BJ (cell line): ENCODE measurements at regions of chr10 and their contacts with region 1.

Region 1: DNA sequence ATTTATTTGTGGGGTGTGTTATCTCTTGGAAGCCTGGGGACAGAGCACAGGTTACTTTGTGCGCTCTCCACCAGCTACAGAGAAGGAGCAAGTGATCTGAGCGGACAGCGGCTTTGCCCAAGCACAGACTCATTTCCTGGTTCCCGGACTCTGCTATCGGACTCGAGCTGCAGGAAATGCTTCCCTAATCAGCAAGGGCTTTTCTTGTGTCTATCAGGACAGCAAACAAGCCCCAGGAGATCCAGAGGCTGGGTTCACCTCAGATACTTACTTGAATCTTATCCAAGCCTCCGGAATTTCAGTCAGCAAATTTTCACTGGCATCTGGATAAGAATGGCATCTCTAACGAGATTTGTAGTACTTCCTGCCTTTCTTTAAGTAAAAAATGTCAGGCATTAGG is 27.8 kb downstream of the MRC1 start:
- DNase-seq: no peak
- H3K4me3 ChIP-seq: peak overlapping the region; percentile 18; the same call in 1 of the 2 replicates
- H3K27me3 ChIP-seq: no peaks in the 10 kb centered on the region
- CTCF ChIP-seq: no peak

Region 2: DNA sequence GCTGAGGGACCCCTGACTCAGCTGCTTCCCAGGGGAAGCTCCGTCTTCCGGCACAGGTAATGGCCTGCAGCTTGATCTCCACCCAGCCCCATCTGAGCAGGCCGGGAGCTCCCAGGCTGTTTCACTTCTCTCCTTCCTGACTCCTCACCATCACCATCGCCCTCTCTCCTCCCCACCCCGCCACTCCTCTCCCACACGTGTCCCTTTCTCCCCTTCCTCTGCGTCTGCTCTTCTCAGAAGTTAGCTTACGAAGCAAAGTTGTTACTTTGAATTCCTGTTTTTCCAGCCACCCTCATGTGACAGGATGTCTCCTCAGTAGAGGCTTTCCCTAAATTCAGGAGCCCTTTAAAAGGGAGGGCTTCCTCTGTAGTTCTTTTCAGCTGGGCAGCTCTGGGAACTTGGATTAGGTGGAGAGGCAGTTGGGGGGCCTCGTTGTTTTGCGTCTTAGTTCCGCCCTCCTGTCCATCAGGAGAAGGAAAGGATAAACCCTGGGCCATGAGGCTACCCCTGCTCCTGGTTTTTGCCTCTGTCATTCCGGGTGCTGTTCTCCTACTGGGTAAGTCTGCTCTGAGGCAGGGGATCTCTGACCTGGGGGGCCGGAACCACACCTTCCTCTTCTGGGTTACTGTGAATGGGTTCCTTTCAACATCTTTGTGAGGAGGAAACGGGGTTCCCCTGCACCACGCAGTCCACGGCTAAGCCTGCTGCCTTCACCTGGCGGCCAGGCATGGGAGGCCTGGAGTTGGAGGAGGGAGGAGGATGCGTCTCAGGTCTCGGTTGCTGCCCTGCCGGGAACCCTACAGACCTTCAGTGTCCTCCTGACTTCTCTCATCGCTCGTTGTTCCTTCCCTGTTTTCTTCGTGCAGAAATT is 27.7 kb before region 1 on chr10 and contains the start of gene MRC1:
- CTCF ChIA-PET with region 1: no interaction called
- POLR2A ChIA-PET with region 1: no interaction called
- DNase-seq: no peak
- H3K4me3 ChIP-seq: no peak within 1 kb of the TSS
- H3K27me3 ChIP-seq: no peaks in the 10 kb centered on the region
- CTCF ChIP-seq: no peak
- polyA plus RNA-seq, gene MRC1: not detected in 2 replicates

Region 3: GRCh38 chr10:17847585-17848296 is 10.8 kb after region 1 on chr10:
- CTCF ChIA-PET with region 1: interaction called, 16 read pairs
- POLR2A ChIA-PET with region 1: no interaction called
- DNase-seq: no peak
- H3K4me3 ChIP-seq: no peak overlapping the region
- H3K27me3 ChIP-seq: no peaks in the 10 kb centered on the region
- CTCF ChIP-seq: peak; percentile 37